GM18951 (cell line): ENCODE measurements at regions of chr17 and their contacts with region 1.

Region 1: GRCh38 chr17:75904749-75905521 is at the start of gene MRPL38:
- POLR2A ChIP-seq: peak; percentile 88

Region 2: GRCh38 chr17:75584849-75585175 is 320.1 kb before region 1 on chr17:
- in situ Hi-C with region 1: no loop called
- POLR2A ChIP-seq: no peak

Region 3: DNA sequence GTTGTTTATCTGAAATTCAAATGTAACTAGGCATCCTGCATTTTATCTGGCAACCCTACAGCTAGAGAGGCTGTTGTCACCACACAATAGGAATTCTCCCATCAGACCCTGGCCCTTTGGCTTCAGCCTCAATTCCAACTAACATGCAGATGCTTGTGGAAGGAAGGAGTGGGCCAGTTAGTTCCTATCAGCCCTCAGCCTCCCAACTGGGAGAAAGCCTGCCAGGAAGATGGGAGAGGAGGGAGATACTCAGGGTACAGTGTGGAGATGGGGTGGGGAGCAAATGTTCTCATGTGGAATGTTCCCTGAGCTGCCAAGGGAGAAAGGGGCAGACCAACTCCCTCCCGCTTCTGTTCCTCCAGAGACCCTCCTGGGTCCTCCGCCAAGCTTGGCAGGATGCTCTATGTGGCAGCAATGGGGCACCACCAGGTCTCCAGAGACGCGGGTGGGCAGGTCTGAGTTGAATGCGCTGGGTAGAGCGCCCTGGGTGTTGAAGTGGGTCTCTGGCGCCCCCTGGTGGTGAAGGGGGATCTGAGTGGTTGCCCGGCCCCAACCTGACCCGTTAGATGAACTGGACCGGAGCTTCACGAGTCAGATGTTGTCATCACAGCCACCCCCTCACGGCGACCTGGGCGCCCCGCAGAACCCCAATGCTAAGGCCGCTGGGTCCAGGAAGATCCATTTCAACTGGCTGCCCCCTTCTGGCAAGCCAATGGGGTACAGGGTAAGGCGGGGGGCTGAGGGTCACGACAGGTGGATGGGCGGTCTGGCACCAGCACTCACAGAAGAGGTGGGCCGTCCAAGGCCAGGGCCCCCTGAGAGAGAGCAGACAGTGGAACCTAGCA is 155.2 kb before region 1 on chr17:
- in situ Hi-C with region 1: no loop called
- POLR2A ChIP-seq: no peak

Region 4: GRCh38 chr17:76005263-76006149 is 100.6 kb after region 1 on chr17:
- in situ Hi-C with region 1: loop called (anchors 10 kb)
- POLR2A ChIP-seq: no peak

Region 5: DNA sequence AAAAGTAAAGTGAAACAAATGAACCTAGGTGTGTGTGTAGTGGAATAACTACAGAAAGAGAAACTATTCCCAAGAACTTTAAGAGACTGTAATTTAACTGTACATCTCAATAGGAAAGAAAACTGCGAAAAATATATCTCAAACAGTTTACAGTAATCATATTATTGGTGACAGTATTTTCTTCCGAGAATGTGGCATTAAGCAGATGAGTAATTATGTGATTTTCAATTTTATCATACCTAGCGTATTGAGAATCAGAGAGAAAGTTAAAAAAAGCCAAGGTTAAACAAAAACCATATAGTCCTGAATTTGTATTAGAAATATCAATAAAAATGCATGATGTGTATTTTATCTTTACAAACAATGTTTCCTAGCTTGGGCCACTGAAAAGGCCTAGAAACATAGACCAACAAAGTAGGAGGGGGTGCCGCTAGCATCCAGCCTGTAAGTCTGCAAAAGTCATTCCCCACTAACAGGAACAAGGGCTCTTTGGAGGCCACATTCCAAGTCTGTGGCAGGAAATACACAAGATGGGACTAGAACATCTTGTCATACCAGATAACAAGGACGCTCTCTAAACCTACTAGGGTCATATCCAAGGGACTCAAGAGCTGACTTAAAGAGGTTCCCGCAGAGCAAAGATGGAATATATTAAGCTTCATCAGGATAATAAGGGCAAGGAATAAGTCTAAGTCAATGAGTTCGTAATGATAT is 314.9 kb after region 1 on chr17:
- in situ Hi-C with region 1: no loop called
- POLR2A ChIP-seq: no peak

Region 6: DNA sequence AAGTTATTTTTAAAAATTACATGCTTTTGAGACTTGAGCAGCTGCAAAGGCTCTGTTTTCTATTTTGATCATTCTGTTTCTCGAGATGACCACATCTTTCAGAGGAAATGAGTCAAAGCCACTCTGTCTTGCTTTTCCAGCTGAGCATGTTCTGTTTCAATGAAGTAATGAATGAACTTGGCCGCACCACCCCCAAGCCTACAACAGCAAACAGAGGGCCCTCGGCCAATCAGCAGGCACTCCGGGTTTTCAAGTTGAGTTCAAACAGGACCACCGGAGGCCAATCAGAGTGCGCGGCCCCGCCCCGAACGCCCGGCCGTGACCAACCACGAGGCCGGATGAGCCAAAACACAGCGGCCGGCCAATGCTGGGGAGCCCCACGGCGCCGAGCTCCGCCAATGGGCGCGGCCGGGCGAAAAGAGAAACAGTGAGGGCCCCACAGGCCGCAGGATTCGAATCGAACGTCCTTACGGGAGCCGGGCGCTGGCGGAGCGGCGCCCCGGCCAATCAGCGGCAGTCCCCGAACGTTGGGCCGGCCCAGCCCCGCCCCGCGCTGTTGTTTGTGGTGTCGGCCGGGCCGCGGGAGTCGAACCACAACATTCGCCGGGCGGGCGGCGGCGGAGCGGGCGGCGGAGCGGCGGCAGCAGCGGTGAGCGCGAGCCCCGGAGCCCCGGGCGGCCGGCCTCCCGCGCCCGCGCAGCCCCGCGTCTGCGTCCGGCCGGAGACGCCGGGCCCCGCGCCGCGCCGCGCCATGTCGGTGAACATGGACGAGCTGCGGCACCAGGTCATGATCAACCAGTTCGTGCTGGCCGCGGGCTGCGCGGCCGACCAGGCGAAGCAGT is 360.0 kb after region 1 on chr17 and contains the start of gene UBALD2:
- in situ Hi-C with region 1: no loop called
- POLR2A ChIP-seq: peak; percentile 96

Region 7: GRCh38 chr17:76278952-76279741 is 374.2 kb after region 1 on chr17:
- in situ Hi-C with region 1: loop called (anchors 25 kb)
- POLR2A ChIP-seq: no peak